Esophagus squamous epithelium (tissue), 5 donors: ENCODE measurements at regions of chr11 and their contacts with region 1.

Region 1: DNA sequence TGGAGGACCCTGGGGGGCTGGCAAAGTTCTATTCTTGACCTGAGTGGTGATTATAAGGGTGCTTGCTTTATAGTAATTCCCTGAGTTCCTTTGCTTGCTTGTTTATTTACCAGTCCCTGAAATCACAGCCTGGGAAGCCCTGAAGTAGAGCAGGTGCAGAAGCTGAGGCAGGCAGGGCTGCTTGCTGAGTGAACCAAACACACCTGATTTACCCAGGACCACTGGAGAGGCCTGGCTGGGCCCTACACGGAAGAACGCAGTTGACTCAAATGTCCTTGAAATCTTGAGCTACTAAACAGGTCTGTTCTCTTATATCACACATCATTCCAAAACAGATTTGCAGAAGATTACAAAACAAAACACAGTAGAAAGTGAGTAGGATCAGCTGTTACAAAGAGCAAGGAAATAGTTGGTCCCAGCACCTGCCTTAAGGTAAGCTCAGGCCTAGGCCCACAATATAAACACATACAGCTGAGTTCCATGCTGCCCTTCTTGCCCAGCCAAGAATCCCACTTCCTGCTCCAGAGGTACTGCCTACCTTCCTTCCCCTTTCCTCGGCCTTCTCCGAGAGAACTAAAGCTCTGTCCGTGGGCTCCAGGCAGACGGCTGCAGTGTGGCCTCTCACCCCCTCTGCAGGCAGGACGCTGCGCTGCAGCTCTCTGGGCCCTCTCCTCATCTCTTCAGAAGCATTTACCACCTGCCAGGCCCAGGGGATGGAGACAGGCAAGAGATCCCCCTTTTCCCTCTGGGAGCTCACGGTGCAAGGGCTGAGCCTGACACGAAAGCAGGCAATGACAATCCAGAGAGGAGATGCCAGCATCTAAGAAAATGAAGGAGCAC is 46.1 kb upstream of the SCUBE2 start:
- DNase-seq: peak; percentile 8
- H3K4me3 ChIP-seq: no peak overlapping the region
- H3K27ac ChIP-seq: peak overlapping the region; percentile 37 to 79 (median 66)
- H3K4me1 ChIP-seq: peaks cover 7 to 41% (median 30%) of the 10 kb centered on the region in 3 donors
- H3K27me3 ChIP-seq: no peaks in the 10 kb centered on the region
- CTCF ChIP-seq: peak; percentile 54 to 97 (median 92)
- POLR2A ChIP-seq: no peak

Region 2: GRCh38 chr11:9015677-9016076 is 121.8 kb before region 1 on chr11:
- intact Hi-C with region 1: loop called (anchors 5 kb)
- DNase-seq: peak; percentile 13
- H3K4me3 ChIP-seq: no peak overlapping the region
- H3K27ac ChIP-seq: no peak overlapping the region
- H3K4me1 ChIP-seq: peaks cover 0 to 21% (median 3%) of the 10 kb centered on the region in 3 donors
- H3K27me3 ChIP-seq: no peaks in the 10 kb centered on the region
- CTCF ChIP-seq: peak; percentile 72 to 80 (median 78)
- POLR2A ChIP-seq: no peak